Heart left ventricle (tissue), 16 donors: ENCODE measurements at regions of chr3 and their contacts with region 1.

Region 1: DNA sequence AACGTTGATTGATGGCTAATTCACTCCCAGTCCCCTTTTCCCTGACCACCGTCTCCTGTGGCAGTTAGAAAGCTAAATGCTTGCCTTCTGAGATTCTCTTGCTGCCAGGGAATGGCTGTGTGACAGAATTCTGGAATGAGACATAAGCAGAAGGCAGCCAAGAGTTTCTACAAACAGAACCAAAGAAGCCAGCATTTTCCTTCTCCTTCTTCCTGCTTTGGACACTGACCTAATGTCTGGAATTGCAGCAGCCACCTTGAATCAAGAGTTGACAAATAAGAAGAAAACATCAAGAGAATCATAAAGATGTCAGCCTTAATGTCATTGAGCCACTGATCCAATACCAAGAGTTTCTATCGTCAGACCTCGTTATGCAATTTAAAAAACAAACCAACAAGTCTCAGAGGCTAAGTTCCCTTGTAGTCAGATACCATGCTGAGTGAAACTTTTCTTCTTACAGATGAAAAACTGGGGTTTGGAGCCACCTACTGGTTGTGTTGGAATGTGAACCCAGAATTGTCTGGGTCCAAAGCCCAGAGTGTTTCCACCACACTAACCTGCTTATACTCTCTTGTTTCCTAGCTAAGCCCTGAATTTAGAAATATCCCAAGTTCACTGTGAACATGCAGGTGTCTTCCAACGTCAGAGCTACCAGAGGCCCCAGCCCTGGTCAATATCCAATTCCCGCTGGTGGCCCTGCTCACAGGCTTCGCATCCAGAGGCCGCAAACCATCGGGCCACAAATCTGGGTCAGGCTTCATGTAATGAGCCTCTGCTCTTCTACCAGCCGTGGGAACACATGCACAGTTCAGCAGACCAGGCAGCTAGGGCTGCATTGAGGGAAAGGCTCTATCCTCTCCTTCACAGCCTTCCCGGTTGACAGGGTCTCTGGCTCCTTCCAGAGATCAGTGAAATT is 42.5 kb downstream of the MCF2L2 start:
- DNase-seq: peak in 2 of 5 donors; percentile 27 to 46
- ATAC-seq: peak in 3 of 4 donors; percentile 83 to 89 (median 87)
- H3K4me3 ChIP-seq: no peak overlapping the region
- H3K27ac ChIP-seq: no peak overlapping the region
- H3K4me1 ChIP-seq: peaks cover 0 to 16% (median 0%) of the 10 kb centered on the region in 12 donors
- H3K27me3 ChIP-seq: no peaks in the 10 kb centered on the region
- CTCF ChIP-seq: peak; percentile 59 to 80 (median 70)
- POLR2A ChIP-seq: no peak

Region 2: DNA sequence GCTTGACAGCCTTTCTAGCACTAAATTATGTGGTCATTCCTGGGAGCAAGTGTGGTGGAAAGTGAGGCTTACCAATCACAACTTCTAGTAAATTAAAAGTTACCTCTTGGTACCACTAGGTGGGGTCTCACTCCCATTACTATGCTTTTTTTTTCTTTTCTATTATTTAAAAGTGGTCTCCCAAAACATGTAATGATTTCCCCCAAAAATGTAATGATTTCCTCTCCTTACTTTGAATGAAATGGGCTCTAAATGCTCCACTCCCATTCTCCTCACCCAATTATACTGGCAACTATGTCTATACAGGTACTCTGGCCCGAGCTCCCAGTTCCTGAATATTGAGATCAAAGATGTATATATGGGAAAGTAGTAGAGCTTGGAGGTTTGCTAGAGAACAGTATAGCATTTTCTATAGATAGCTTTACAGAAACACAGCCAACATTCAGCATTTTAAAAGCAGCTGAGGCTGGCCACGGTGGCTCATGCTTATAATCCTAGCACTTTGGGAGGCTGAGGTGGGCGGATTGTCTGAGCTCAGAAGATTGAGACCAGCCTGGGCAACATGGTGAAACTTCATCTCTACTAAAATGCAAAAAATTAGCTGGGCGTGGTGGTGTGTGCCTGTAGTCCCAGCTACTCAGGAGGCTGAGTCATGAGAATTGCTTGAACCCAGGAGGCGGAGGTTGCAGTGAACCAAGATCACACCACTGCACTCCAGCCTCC is 476.5 kb before region 1 on chr3:
- intact Hi-C with region 1: loop called in 1 of 10 experiments (anchors 5 kb)
- DNase-seq: no peak
- ATAC-seq: no peak
- H3K4me3 ChIP-seq: no peak overlapping the region
- H3K27ac ChIP-seq: no peak overlapping the region
- H3K4me1 ChIP-seq: peaks cover 0 to 4% (median 0%) of the 10 kb centered on the region in 12 donors
- H3K27me3 ChIP-seq: no peaks in the 10 kb centered on the region
- CTCF ChIP-seq: peak; percentile 22 to 59 (median 42)
- POLR2A ChIP-seq: no peak

Region 3: DNA sequence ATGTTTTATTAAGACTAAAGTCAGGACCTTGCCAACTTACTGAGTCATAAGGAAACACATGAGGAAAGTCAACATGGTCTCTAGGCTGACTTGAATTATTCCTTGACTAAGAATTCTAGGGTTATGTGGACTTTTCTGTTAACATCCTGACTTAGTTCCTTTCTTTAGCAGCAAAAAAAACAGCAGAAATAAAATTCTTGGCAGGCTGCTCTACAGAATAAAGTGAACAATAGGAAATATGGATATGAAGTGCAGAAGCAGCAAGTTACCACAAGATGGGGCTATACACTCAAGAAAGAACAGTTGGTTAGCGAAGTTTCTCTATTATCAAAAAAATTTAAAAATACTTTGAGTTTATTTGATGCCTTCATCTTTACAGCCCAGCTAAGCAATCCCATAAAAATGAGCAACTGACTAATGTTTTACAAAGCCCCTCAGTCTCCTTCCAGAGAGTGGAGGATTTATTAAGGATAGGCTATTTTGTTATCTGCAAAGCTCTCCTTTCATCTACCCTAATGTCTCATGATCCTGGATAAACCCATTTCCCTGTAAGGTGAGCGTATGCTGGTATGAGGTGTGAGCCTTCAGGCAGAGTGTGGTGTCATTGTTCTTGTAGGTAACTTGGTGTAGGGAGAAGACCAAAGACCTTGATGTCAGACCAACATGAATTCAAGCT is 263.6 kb before region 1 on chr3:
- intact Hi-C with region 1: loop called (anchors 1 to 5 kb)
- DNase-seq: no peak
- ATAC-seq: peak in 3 of 4 donors; percentile 34 to 57 (median 49)
- H3K4me3 ChIP-seq: no peak overlapping the region
- H3K27ac ChIP-seq: no peak overlapping the region
- H3K4me1 ChIP-seq: peaks cover 0 to 3% (median 0%) of the 10 kb centered on the region in 12 donors
- H3K27me3 ChIP-seq: peaks cover 0 to 9% (median 0%) of the 10 kb centered on the region in 9 donors
- CTCF ChIP-seq: peak; percentile 69 to 91 (median 82)
- POLR2A ChIP-seq: no peak